CD8-positive, alpha-beta T cell (primary cell): ENCODE measurements at regions of chr7 and their contacts with region 1.

Region 1: GRCh38 chr7:130205084-130205947 is at the start of gene TMEM209:
- DNase-seq: peak; percentile 85 to 97 (median 93)
- ATAC-seq: peak; percentile 96
- H3K4me3 ChIP-seq: peak within 1 kb of the TSS; percentile 95 to 99
- H3K4me3 Mint-ChIP-seq: peak within 1 kb of the TSS; percentile 100
- H3K27ac ChIP-seq: peak within 1 kb of the TSS; percentile 80 to 92
- H3K27ac Mint-ChIP-seq: peak within 1 kb of the TSS; percentile 100
- H3K4me1 ChIP-seq: peaks cover 5% of the 10 kb centered on the region
- H3K4me1 Mint-ChIP-seq: peaks cover 34% of the 10 kb centered on the region
- H3K27me3 ChIP-seq: no peaks in the 10 kb centered on the region
- H3K27me3 Mint-ChIP-seq: no peaks in the 10 kb centered on the region
- CTCF ChIP-seq: no peak
- total RNA-seq, gene TMEM209: 15.7 to 15.9 TPM

Region 2: DNA sequence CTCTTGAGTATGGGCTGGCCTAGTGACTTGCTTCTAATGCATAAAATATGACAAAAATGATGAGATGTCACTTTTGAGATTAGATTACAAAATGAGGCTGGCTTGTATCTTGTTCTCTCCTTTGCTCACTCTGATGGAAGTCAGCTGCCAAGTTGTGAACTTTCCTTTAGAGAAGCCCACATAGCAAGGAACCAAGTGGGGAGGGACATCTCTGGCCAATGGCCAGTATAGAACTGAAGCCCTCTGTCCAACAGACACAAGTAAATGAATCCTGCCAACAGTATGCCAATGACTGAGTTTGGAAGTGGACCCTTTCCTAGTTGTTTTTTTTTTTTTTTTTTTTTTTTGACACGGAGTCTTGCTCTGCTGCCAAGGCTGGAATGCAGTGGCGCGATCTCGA is 157.5 kb before region 1 on chr7:
- CTCF ChIA-PET with region 1: no interaction called
- POLR2A ChIA-PET with region 1: interaction called, 3 read pairs
- intact Hi-C with region 1: loop called in 1 of 2 experiments (anchors 2 kb)
- DNase-seq: no peak
- ATAC-seq: no peak
- H3K4me3 ChIP-seq: no peak overlapping the region
- H3K4me3 Mint-ChIP-seq: no peak overlapping the region
- H3K27ac ChIP-seq: no peak overlapping the region
- H3K27ac Mint-ChIP-seq: no peak overlapping the region
- H3K4me1 ChIP-seq: peaks cover 3% of the 10 kb centered on the region
- H3K4me1 Mint-ChIP-seq: peaks cover 14% of the 10 kb centered on the region
- H3K27me3 ChIP-seq: no peaks in the 10 kb centered on the region
- H3K27me3 Mint-ChIP-seq: no peaks in the 10 kb centered on the region
- CTCF ChIP-seq: no peak

Region 3: GRCh38 chr7:130668257-130669084 is 463.2 kb after region 1 on chr7 and contains the start of gene COPG2:
- CTCF ChIA-PET with region 1: no interaction called
- POLR2A ChIA-PET with region 1: no interaction called
- intact Hi-C with region 1: loop called (anchors 1 kb)
- DNase-seq: peak; percentile 34 to 87 (median 72)
- ATAC-seq: peak; percentile 81
- H3K4me3 ChIP-seq: peak within 1 kb of the TSS; percentile 73 to 77
- H3K4me3 Mint-ChIP-seq: peak within 1 kb of the TSS; percentile 93
- H3K27ac ChIP-seq: peak within 1 kb of the TSS; percentile 43 to 61
- H3K27ac Mint-ChIP-seq: peak within 1 kb of the TSS; percentile 76
- H3K4me1 ChIP-seq: no peaks in the 10 kb centered on the region
- H3K4me1 Mint-ChIP-seq: peaks cover 20% of the 10 kb centered on the region
- H3K27me3 ChIP-seq: no peaks in the 10 kb centered on the region
- H3K27me3 Mint-ChIP-seq: peaks cover 3% of the 10 kb centered on the region
- CTCF ChIP-seq: no peak
- total RNA-seq, gene COPG2: 2.7 to 3.0 TPM